ENCODE measurements at regions of chr21 and their contacts with region 1.

Region 1: GRCh38 chr21:33491373-33492102 is at the start of gene DNAJC28:
- DNase-seq: peak; percentile 93 to 98 (median 95)
- H3K4me3 ChIP-seq: peak within 1 kb of the TSS; percentile 94
- H3K4me3 Mint-ChIP-seq: peak within 1 kb of the TSS; percentile 81 to 99 (median 91)
- H3K27ac ChIP-seq: peak within 1 kb of the TSS; percentile 68
- H3K27ac Mint-ChIP-seq: peak within 1 kb of the TSS; percentile 74 to 97 (median 92)
- H3K4me1 ChIP-seq: peaks cover 9% of the 10 kb centered on the region
- H3K4me1 Mint-ChIP-seq: peaks cover 9 to 14% (median 12%) of the 10 kb centered on the region in 3 donors
- H3K27me3 ChIP-seq: no peaks in the 10 kb centered on the region
- H3K27me3 Mint-ChIP-seq: peaks cover 0 to 4% of the 10 kb centered on the region in 2 donors
- total RNA-seq, gene DNAJC28: 0.60 to 0.63 TPM

Region 2: GRCh38 chr21:33406493-33406892 is 85.0 kb before region 1 on chr21:
- CTCF ChIA-PET with region 1: no interaction called
- POLR2A ChIA-PET with region 1: no interaction called
- DNase-seq: no peak
- H3K4me3 ChIP-seq: no peak overlapping the region
- H3K4me3 Mint-ChIP-seq: peak overlapping the region in 1 of 7 donors; percentile 10
- H3K27ac ChIP-seq: no peak overlapping the region
- H3K27ac Mint-ChIP-seq: peak overlapping the region in 2 of 8 donors; percentile 36 to 38
- H3K4me1 ChIP-seq: peaks cover 29% of the 10 kb centered on the region
- H3K4me1 Mint-ChIP-seq: peaks cover 16 to 38% (median 31%) of the 10 kb centered on the region in 3 donors
- H3K27me3 ChIP-seq: no peaks in the 10 kb centered on the region
- H3K27me3 Mint-ChIP-seq: peaks cover 14 to 25% of the 10 kb centered on the region in 2 donors

Region 3: DNA sequence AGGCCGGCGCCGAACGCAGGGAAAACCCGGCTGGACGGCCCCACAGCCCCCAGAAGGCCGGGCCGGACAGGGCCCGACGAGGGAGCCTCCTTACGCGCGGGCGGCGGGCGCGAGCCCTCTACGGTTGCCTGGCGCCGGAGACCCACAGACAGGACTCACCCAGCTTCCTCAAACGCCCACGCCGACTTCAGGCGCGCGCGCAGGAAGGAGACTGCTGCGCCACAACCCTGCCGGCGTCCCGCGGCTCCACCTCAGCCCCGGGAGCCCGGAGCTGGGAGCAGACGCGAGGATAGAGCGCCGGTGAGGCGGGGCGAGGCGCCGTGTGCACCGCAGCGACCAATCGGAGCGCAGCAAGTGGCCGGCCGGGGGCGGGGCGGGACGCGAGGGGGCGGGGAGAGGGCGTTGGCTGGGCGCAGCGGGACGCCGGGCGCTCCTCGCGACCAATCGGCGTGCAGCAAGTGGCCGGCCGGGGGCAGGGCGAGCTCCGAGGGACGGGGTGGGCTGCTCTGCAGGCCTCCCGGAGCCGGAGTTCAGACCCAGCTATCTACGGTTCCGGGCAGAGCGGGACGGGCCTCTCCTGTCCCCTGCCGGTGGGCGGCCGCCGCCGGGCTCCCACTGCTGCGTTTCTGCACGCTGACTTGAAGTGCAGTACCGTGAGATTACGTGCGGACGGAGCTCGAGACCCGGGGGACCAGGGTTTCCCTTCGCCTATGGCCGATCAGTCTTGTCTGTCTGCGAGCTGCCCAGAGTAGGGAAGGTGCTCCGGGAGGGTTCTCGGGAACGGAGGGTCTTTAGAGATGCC is 11.7 kb before region 1 on chr21 and contains the start of gene TMEM50B:
- CTCF ChIA-PET with region 1: interaction called, 22 read pairs
- POLR2A ChIA-PET with region 1: interaction called, 77 read pairs
- DNase-seq: peak; percentile 94 to 97 (median 95)
- H3K4me3 ChIP-seq: peak within 1 kb of the TSS; percentile 94
- H3K4me3 Mint-ChIP-seq: peak within 1 kb of the TSS; percentile 90 to 95 (median 94)
- H3K27ac ChIP-seq: peak within 1 kb of the TSS; percentile 89
- H3K27ac Mint-ChIP-seq: peak within 1 kb of the TSS; percentile 89 to 97 (median 93)
- H3K4me1 ChIP-seq: peaks cover 11% of the 10 kb centered on the region
- H3K4me1 Mint-ChIP-seq: peaks cover 24 to 29% (median 27%) of the 10 kb centered on the region in 3 donors
- H3K27me3 ChIP-seq: no peaks in the 10 kb centered on the region
- H3K27me3 Mint-ChIP-seq: no peaks in the 10 kb centered on the region
- total RNA-seq, gene TMEM50B: 29.2 to 29.4 TPM

Region 4: GRCh38 chr21:33505833-33506232 is 14.3 kb after region 1 on chr21:
- CTCF ChIA-PET with region 1: no interaction called
- POLR2A ChIA-PET with region 1: no interaction called
- DNase-seq: no peak
- H3K4me3 ChIP-seq: no peak overlapping the region
- H3K4me3 Mint-ChIP-seq: no peak overlapping the region
- H3K27ac ChIP-seq: no peak overlapping the region
- H3K27ac Mint-ChIP-seq: peak overlapping the region in 1 of 8 donors; percentile 43
- H3K4me1 ChIP-seq: no peaks in the 10 kb centered on the region
- H3K4me1 Mint-ChIP-seq: no peaks in the 10 kb centered on the region
- H3K27me3 ChIP-seq: no peaks in the 10 kb centered on the region
- H3K27me3 Mint-ChIP-seq: no peaks in the 10 kb centered on the region